Activated B cell treated with CpG ODN at 0.5 μM for 24 hours (primary cell): ENCODE measurements at regions of chr1 and their contacts with region 1.

Region 1: DNA sequence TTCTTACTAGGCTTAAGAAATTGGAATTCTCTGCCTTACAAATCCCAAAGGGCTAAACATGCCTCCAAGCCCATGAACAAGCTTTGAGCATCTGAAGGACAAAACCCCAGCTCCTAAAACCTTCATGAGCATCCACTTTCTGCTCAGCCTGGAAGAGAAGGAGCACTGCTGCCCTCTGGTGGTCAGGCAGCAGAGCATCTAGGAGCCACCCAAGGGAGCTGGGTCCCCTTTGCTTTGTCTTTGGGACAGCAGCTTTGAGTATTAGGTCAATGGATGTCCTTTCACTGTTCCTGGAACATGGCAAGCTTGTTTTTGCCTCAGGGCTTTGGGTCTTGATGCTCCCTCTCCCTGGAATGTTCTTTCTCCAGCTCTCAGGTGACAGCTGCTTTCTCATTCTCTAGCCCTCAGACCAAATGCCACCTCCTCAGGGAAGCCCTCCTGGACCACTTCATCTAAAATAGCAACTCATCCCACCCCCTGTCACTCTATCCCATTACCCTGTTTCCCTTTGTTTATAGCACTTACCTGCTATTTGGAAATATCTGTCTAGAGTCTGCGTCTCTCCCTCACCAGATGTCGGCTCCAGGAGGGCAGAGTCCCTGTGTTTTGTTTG is 25.7 kb downstream of the RAB7B start:
- DNase-seq: peak; percentile 65
- ATAC-seq: peak; percentile 95
- H3K4me3 Mint-ChIP-seq: no peak overlapping the region
- H3K27ac Mint-ChIP-seq: no peak overlapping the region
- H3K4me1 Mint-ChIP-seq: no peaks in the 10 kb centered on the region
- H3K27me3 Mint-ChIP-seq: peaks cover 2% of the 10 kb centered on the region
- CTCF ChIP-seq: peak; percentile 83

Region 2: GRCh38 chr1:205591522-205592351 is 385.8 kb before region 1 on chr1:
- CTCF ChIA-PET with region 1: interaction called, 28 read pairs
- POLR2A ChIA-PET with region 1: no interaction called
- intact Hi-C with region 1: loop called (anchors 2 kb)
- DNase-seq: peak; percentile 89
- ATAC-seq: peak; percentile 89
- H3K4me3 Mint-ChIP-seq: peak overlapping the region; percentile 90
- H3K27ac Mint-ChIP-seq: peak overlapping the region; percentile 90
- H3K4me1 Mint-ChIP-seq: peaks cover 48% of the 10 kb centered on the region
- H3K27me3 Mint-ChIP-seq: no peaks in the 10 kb centered on the region
- CTCF ChIP-seq: peak; percentile 87

Region 3: GRCh38 chr1:205668951-205669340 is 308.6 kb before region 1 on chr1:
- CTCF ChIA-PET with region 1: interaction called, 17 read pairs
- POLR2A ChIA-PET with region 1: interaction called, 3 read pairs
- intact Hi-C with region 1: loop called (anchors 1 kb)
- DNase-seq: no peak
- ATAC-seq: peak; percentile 68
- H3K4me3 Mint-ChIP-seq: peak overlapping the region; percentile 80
- H3K27ac Mint-ChIP-seq: peak overlapping the region; percentile 93
- H3K4me1 Mint-ChIP-seq: peaks cover 87% of the 10 kb centered on the region
- H3K27me3 Mint-ChIP-seq: no peaks in the 10 kb centered on the region
- CTCF ChIP-seq: no peak

Region 4: DNA sequence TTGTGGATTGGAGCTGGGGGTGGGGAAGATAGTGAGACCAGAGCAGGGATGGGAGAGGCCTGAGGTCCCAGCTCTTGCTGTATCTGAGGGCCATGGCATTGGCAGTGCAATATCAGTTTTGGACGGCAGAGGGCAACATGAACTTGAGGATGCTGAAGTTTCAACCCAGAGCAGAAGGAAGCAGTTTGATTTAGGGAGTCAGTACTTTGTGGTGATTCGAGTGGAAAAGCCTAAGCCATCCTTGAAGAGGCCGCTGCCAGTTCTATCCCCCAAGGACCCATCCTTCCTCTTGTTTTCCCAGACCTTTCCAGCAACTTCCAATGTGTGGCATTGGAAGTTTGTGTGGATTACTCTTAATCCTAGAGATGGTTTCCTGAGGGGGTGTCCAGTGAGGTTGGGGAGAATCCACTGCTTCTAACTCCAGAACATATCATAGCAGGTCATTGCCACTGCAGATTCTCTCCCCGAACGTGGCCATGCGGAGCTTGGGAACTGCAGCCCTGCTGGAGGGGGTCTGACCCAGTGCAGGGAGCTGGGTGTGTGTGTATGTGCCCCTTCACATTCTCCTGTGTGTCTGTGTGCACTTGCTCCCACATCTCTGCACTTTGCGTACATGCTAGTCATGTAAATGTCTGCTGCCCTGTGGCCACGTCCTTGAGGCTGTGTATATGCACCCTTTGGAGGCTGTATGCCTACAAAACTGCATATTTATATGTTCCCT is 58.3 kb before region 1 on chr1:
- CTCF ChIA-PET with region 1: interaction called, 88 read pairs
- POLR2A ChIA-PET with region 1: no interaction called
- intact Hi-C with region 1: loop called (anchors 1 kb)
- DNase-seq: peak; percentile 58
- ATAC-seq: peak; percentile 93
- H3K4me3 Mint-ChIP-seq: no peak overlapping the region
- H3K27ac Mint-ChIP-seq: no peak overlapping the region
- H3K4me1 Mint-ChIP-seq: no peaks in the 10 kb centered on the region
- H3K27me3 Mint-ChIP-seq: peaks cover 5% of the 10 kb centered on the region
- CTCF ChIP-seq: no peak

Region 5: GRCh38 chr1:205961405-205961804 is 16.1 kb before region 1 on chr1:
- CTCF ChIA-PET with region 1: interaction called, 13 read pairs
- POLR2A ChIA-PET with region 1: no interaction called
- intact Hi-C with region 1: no loop called
- DNase-seq: no peak
- ATAC-seq: no peak
- H3K4me3 Mint-ChIP-seq: no peak overlapping the region
- H3K27ac Mint-ChIP-seq: no peak overlapping the region
- H3K4me1 Mint-ChIP-seq: no peaks in the 10 kb centered on the region
- H3K27me3 Mint-ChIP-seq: peaks cover 8% of the 10 kb centered on the region
- CTCF ChIP-seq: no peak

Region 6: GRCh38 chr1:206006946-206007345 is 29.4 kb after region 1 on chr1:
- CTCF ChIA-PET with region 1: no interaction called
- POLR2A ChIA-PET with region 1: no interaction called
- intact Hi-C with region 1: no loop called
- DNase-seq: no peak
- ATAC-seq: no peak
- H3K4me3 Mint-ChIP-seq: no peak overlapping the region
- H3K27ac Mint-ChIP-seq: no peak overlapping the region
- H3K4me1 Mint-ChIP-seq: peaks cover 9% of the 10 kb centered on the region
- H3K27me3 Mint-ChIP-seq: no peaks in the 10 kb centered on the region
- CTCF ChIP-seq: no peak

Region 7: GRCh38 chr1:206106328-206107167 is 129.0 kb after region 1 on chr1:
- CTCF ChIA-PET with region 1: interaction called, 154 read pairs
- POLR2A ChIA-PET with region 1: interaction called, 3 read pairs
- intact Hi-C with region 1: no loop called
- DNase-seq: peak; percentile 71
- ATAC-seq: peak; percentile 89
- H3K4me3 Mint-ChIP-seq: no peak overlapping the region
- H3K27ac Mint-ChIP-seq: peak overlapping the region; percentile 73
- H3K4me1 Mint-ChIP-seq: peaks cover 34% of the 10 kb centered on the region
- H3K27me3 Mint-ChIP-seq: no peaks in the 10 kb centered on the region
- CTCF ChIP-seq: peak; percentile 70